ENCODE measurements at regions of chr5 and their contacts with region 1.

Region 1: DNA sequence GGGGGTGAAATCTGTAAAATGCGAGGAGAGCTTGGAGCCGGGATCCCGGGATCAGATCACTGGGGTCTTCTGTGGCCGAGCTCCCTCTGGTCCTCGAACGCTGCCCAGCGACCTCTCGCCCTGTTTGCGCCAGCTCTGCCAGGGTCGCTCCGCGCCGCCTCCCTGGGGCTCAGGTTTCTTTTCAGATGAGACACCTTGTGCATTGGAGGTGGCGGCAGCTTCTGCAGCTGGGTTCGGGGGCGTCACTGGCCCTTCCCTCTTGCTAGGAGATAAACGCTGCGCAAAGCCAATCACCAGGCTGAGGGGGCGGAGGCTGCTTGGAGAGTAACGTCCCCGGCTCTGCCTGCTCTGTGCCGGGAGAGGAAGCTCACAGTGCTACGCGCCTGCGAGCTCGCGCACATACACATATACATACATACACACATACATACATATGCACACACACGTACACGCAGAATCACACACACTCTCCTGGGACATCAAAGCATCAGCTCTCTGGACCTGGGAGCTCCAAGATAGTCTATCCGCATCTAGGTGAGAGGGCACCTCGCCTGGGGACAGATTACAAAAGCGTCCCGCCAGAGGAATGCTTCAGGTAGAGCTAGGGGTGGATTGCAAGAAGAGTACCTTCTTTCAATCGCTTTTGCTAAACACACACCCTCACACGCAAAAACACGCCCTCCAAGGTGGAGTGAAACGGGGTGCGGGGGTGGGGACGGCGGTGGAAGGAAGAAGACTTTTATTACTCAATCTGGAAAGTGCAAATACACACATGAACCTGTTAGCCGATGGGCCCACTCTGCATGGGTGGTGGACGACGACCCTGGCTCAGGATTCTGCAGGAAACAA is at the start of gene ST8SIA4:
- DNase-seq: peak; percentile 97
- H3K4me3 Mint-ChIP-seq: peak within 1 kb of the TSS; percentile 99
- H3K27ac Mint-ChIP-seq: peak within 1 kb of the TSS; percentile 96
- H3K4me1 Mint-ChIP-seq: peaks cover 35% of the 10 kb centered on the region
- H3K27me3 Mint-ChIP-seq: no peaks in the 10 kb centered on the region
- total RNA-seq, gene ST8SIA4: 61.3 and 62.3 TPM in 2 replicates

Region 2: DNA sequence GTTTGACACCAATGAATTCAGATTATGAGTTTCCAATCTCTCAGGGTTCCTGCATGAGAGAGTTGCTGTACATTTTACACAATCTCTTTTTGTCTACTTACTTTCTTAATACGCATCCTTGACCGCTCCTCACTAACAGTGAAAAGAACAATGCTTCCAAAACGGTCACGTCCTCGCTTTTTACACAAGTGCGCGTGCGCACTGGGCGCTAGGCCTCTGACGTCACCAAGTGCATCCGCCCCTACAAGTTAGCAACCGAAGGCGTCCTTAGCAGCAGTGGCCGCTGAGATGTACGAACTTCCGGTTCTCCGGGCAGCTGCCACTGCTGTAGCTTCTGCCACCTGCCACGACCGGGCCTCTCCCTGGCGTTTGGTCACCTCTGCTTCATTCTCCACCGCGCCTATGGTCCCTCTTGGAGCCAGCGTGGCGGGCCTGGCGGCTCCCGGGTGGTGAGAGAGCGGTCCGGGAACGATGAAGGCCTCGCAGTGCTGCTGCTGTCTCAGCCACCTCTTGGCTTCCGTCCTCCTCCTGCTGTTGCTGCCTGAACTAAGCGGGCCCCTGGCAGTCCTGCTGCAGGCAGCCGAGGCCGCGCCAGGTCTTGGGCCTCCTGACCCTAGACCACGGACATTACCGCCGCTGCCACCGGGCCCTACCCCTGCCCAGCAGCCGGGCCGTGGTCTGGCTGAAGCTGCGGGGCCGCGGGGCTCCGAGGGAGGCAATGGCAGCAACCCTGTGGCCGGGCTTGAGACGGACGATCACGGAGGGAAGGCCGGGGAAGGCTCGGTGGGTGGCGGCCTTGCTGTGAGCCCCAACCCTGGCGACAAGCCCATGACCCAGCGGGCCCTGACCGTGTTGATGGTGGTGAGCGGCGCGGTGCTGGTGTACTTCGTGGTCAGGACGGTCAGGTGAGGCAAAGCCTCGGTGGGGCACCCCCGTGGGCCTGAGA is 367.9 kb before region 1 on chr5 and contains the start of gene FAM174A:
- intact Hi-C with region 1: loop called (anchors 1 kb)
- DNase-seq: peak; percentile 98
- H3K4me3 Mint-ChIP-seq: peak within 1 kb of the TSS; percentile 98
- H3K27ac Mint-ChIP-seq: peak within 1 kb of the TSS; percentile 88
- H3K4me1 Mint-ChIP-seq: peaks cover 19% of the 10 kb centered on the region
- H3K27me3 Mint-ChIP-seq: peaks cover 10% of the 10 kb centered on the region
- total RNA-seq, gene FAM174A: 8.1 and 10.0 TPM in 2 replicates

Region 3: DNA sequence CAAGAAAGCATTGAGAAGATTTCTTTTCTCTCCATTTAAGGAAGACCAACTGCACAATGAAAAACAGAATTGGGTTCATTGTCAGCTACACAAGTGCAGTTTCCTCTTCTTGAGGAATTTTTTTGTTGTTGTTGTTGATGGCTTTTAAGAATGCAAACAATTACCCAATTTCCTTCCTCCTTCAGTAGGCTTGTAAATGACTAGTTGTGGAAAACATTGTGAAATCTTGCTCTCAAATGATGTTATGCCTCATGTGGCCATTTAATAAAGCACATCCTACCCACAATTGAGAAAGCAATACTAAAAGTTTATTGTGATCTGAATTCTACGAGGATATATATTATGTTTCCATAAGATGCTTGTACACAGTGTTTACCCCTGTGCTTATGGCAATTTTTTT is 196.5 kb before region 1 on chr5:
- intact Hi-C with region 1: no loop called
- DNase-seq: no peak
- H3K4me3 Mint-ChIP-seq: no peak overlapping the region
- H3K27ac Mint-ChIP-seq: no peak overlapping the region
- H3K4me1 Mint-ChIP-seq: peaks cover 2% of the 10 kb centered on the region
- H3K27me3 Mint-ChIP-seq: peaks cover 7% of the 10 kb centered on the region

Region 4: DNA sequence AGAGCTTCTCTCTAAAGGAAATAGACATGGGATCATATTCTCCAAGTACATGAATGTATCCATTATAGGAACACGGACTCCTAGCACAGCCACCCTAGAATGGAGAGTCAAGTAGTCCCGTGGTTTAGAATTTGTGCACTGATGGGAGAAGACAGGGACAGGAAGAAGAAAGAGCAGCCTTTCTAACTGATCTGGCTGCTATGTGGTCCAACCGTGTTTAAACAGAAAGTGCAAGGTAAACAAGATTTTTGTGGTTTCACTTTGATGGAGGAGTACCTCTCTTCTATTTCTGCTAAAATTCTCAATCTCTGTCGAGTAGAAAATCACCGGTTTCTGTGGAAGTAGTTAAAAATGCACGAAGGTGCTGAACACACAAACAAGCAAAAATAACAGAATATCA is 171.5 kb before region 1 on chr5:
- intact Hi-C with region 1: loop called (anchors 5 kb)
- DNase-seq: peak; percentile 82
- H3K4me3 Mint-ChIP-seq: peak overlapping the region; percentile 70
- H3K27ac Mint-ChIP-seq: peak overlapping the region; percentile 80
- H3K4me1 Mint-ChIP-seq: peaks cover 9% of the 10 kb centered on the region
- H3K27me3 Mint-ChIP-seq: no peaks in the 10 kb centered on the region

Region 5: GRCh38 chr5:100840384-100840783 is 62.9 kb before region 1 on chr5:
- intact Hi-C with region 1: loop called (anchors 1 kb)
- DNase-seq: peak; percentile 76
- H3K4me3 Mint-ChIP-seq: peak overlapping the region; percentile 74
- H3K27ac Mint-ChIP-seq: peak overlapping the region; percentile 95
- H3K4me1 Mint-ChIP-seq: peaks cover 51% of the 10 kb centered on the region
- H3K27me3 Mint-ChIP-seq: no peaks in the 10 kb centered on the region

Region 6: DNA sequence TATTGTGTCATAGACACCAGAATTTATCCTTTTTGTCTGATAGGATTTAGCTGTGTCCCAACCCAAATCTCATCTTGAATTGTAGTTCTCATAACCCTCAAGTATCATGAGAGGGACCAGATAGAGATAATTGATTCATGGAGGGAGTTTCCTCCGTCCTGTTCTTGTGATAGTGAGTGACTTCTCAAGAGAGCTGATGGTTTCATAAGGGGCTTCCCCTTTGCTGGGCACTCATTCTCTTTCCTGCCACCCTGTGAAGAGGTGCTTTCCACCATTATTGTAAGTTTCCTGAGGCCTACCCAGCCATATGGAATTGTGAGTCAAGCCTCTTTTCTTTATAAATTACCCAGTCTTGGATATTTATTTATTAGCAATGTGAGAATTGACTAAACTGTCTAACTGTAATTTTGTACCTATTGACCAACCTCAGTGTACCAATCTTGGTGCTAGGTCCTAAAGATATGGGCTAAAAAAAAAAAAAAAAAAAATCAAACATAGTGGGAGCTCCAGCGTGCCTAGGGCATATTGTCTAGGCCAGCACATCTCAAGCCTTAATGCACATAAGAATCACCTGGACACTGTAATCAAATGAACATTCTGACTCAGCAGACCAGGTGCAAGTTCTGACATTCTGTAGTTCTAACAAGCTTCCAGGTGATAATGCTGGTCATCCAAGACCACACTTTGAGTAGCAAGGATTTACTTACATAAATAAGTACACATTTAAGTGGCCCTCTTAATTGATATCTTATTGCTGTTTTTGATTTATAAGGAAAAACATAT is 30.7 kb before region 1 on chr5:
- intact Hi-C with region 1: loop called (anchors 1 kb)
- DNase-seq: no peak
- H3K4me3 Mint-ChIP-seq: no peak overlapping the region
- H3K27ac Mint-ChIP-seq: peak overlapping the region; percentile 48
- H3K4me1 Mint-ChIP-seq: peaks cover 38% of the 10 kb centered on the region
- H3K27me3 Mint-ChIP-seq: no peaks in the 10 kb centered on the region

Region 7: DNA sequence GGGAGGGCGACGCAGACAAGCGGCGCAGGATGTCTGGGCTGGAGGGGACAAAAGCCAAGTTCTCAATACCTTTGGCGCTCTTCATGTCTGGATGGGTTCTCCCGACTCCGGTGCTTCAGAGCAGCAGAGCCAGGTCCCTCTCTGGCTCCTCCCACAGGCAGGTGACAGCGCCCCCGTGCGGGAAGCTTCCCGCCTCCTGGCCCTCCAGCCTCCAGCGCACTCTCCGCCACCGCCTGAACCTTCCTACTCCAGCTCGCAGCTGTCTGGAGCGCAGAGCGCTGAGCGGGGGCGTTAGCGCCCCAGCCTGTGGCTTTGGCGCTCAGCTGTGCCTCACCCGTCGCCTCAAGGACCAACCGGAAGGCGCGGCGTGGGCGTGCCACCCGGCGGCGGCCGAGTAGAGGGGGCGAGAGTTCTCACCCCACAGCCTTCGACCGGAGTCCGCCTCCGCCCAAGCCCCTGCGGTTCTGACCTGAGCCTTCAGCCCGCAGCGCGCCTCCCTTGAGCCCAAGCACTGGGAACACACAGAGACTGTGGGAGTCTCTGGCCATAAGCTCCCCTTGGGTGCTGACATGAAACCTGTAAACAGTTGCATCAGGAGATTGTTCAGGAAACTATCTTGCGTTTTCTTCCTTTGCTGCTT is 1393.0 kb after region 1 on chr5 and contains the start of gene SLCO4C1:
- intact Hi-C with region 1: loop called (anchors 5 kb)
- DNase-seq: peak; percentile 91
- H3K4me3 Mint-ChIP-seq: peak within 1 kb of the TSS; percentile 85
- H3K27ac Mint-ChIP-seq: peak within 1 kb of the TSS; percentile 46
- H3K4me1 Mint-ChIP-seq: peaks cover 21% of the 10 kb centered on the region
- H3K27me3 Mint-ChIP-seq: peaks cover 14% of the 10 kb centered on the region
- total RNA-seq, gene SLCO4C1: 0.17 and 0.28 TPM in 2 replicates